ENCODE measurements at regions of chr14 and their contacts with region 1.

Region 1: GRCh38 chr14:64338616-64339316 is 44.6 kb upstream of the ESR2 start:
- DNase-seq: peak; percentile 91
- H3K4me3 Mint-ChIP-seq: peak overlapping the region; percentile 77
- H3K27ac Mint-ChIP-seq: peak overlapping the region; percentile 80
- H3K4me1 Mint-ChIP-seq: peaks cover 33% of the 10 kb centered on the region
- H3K27me3 Mint-ChIP-seq: no peaks in the 10 kb centered on the region

Region 2: GRCh38 chr14:64465191-64465822 is 126.5 kb after region 1 on chr14 and contains the start of gene AKAP5:
- CTCF ChIA-PET with region 1: interaction called, 9 read pairs
- POLR2A ChIA-PET with region 1: interaction called, 10 read pairs
- DNase-seq: peak; percentile 66
- H3K4me3 Mint-ChIP-seq: peak within 1 kb of the TSS; percentile 78
- H3K27ac Mint-ChIP-seq: no peak within 1 kb of the TSS
- H3K4me1 Mint-ChIP-seq: peaks cover 33% of the 10 kb centered on the region
- H3K27me3 Mint-ChIP-seq: peaks cover 4% of the 10 kb centered on the region
- total RNA-seq, gene AKAP5: 0.88 TPM

Measured in activated CD4-positive, alpha-beta memory T cell treated with anti-CD3 and anti-CD28 coated beads, Interleukin-2, amount 10 ng/mL, durations not matched to agents 7 days and 5 days (primary cell).